GM10248 (cell line): ENCODE measurements at regions of chr3 and their contacts with region 1.

Region 1: DNA sequence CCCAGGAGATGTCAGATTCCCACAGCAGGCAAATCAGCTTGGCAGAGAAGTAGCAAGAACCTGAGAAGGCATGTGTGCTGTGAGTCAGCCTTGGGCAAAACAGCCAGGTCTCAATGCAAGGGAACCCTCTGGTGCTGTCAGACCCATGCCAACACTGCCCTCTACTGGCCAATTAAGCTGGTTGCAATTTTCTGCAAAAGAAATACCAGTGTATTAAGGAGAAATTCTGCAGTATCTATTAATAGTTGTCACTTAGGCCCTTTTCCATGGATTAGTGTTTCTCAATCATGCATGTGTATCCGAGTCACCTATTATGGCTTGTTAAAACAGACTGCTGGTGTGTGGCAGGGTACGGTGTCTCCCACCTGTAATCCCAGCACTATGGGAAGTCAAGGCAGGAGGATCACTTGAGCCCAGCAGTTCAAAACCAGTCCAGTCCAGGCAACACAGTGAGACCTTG is 26.2 kb downstream of the MAP4 start:
- DNase-seq: peak; percentile 70
- CTCF ChIP-seq: peak; percentile 85

Region 2: DNA sequence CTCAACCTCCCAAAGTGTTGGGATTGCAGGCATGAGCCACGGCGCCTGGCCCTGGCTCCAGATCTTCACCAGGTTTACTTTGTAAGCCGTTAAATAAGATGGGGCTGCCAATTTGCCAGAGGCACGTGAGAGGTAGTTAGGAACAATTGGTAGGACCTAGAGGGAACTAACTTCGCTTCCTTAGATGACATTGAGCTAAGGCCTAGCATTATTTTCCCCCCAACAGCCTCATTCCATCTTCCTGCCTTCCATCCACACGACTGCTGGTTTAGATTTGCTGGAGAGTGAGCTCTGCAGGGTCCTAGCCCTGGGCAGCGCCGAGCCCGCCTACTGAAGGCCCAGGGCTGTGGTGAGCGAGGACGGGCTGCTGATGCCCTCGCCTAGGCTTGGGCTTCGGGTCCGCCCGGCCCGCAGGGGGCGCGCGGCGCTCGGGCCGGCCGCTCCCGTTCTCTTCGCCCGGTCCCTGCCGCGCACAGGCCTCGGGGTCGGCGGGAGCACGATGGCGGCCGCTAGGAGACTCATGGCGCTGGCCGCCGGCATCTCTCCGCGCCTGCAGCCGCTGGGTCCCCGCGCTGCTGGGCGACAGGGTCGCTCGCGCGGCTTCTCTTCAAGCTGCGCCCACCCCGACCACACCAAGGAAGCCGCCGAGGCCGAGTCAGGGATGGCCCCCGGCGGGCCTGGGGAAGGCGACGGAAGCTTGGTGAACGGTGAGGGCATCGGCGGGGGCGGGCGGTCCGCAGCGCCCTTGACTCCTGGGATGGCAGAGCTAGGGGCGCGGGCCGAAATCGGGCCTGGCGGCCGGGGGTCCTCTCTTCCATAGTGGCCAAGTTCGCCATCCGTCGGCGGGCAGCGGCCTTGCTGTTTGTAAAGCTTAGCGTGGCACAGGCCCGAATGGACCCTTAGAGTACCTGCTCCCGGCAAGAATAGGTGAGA is 165.2 kb before region 1 on chr3:
- CTCF ChIA-PET with region 1: interaction called, 41 read pairs
- POLR2A ChIA-PET with region 1: no interaction called
- DNase-seq: peak; percentile 96
- CTCF ChIP-seq: peak; percentile 96

Region 3: DNA sequence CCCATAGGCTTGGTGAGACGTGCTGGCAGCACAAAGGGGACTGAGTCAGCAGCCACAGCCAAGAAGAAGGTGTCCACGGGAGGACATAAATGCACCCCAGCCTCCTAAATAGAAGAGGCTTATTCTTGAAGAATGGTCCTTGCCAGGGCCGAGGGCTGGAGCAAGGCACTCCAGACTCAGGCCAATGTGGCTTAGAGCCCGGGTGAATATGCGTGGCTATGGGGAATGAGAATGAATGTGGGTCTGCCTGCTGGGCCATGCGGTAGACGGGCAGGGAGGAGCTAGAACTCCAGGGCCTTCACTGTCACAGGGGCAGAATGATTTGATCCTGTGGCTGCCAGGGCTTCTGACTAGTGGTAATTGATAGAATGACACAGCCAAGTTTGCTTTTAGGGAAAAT is 153.0 kb before region 1 on chr3:
- CTCF ChIA-PET with region 1: interaction called, 65 read pairs
- POLR2A ChIA-PET with region 1: no interaction called
- DNase-seq: no peak
- CTCF ChIP-seq: no peak

Region 4: DNA sequence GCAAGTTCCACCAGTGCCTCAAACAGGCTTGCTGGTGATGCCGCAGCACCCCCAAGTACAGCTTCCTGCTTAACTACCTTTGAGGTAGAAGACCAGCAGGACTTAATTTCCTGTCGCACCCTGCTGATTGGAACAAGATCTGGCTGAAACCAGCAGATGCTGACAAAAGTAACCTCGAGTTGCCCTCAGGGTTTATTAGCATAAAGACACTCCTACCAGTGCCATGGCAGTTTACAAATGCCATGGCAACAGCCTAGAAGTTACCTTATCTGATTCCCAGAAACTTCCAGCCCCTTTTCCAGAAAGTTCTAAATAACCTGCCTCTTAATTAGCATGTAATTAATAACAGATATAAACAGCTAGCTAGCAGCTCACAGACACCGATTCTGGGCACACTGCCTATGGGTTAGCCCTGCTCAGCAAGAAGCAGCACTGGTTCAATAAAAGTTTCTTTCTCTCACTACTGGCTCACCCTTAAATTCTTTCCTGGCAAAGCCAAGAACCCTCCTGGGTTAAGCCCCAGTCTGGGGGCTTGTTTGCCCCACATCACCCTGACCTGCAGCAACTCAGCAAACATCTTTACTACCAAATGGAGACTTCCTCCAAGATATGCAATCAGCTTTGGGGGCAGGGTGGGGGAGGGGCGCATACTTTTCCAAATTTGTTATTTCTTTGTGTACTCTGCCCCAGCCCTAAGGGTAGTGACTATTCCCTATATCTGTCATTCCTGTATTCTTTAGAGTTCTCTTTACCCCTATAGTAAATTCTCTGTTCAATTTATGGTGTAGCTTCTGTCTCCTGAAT is 28.0 kb before region 1 on chr3:
- CTCF ChIA-PET with region 1: interaction called, 16 read pairs
- POLR2A ChIA-PET with region 1: no interaction called
- DNase-seq: no peak
- CTCF ChIP-seq: no peak

Region 5: DNA sequence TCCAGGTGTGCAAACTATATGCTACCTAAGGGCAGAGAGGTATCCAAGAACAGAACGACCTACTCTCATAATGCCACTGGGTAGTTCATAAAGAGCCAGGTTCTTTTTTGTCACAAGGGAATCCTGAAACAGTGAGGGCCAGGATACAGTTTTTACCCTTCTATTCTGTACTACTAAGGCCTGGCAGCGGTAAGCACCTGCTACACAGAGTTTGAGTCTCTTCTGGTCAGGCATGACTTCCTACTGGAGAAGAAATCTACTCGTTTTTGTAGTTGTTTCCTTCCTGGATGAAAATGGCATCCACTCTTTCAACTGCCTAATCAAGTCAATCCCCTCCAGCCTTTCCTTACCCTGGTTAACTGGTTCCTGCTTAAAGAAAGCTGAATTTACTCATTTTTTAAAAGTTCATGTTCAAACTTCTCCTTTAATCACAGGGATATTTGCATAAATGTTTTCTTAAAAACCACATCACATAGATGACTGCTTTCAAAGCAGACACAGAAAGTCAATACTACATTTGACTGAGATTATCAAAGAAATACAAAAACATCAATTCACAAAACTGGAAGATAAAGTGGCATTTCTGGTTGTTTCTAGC is 13.8 kb before region 1 on chr3:
- CTCF ChIA-PET with region 1: interaction called, 77 read pairs
- POLR2A ChIA-PET with region 1: no interaction called
- DNase-seq: peak; percentile 30
- CTCF ChIP-seq: no peak

Region 6: DNA sequence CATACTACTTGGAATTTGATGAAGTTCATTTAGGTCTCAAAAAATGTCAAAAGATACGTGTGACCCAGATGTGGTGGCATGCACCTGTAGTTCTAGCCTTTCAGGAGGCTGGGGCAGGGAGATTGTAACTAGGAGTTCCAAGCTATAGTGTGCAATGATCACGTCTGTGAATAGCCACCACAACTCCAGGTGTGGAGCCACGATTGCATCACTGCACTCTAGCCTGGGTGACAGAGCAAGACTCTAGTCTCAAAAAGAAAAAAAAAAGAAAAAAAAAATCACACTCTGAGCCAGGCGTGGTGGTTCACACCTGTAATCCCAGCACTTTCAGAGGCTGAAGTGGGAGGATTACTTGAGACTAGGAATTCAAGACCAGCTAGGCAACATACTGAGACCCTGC is 12.0 kb after region 1 on chr3:
- CTCF ChIA-PET with region 1: interaction called, 18 read pairs
- POLR2A ChIA-PET with region 1: no interaction called
- DNase-seq: no peak
- CTCF ChIP-seq: no peak

Region 7: DNA sequence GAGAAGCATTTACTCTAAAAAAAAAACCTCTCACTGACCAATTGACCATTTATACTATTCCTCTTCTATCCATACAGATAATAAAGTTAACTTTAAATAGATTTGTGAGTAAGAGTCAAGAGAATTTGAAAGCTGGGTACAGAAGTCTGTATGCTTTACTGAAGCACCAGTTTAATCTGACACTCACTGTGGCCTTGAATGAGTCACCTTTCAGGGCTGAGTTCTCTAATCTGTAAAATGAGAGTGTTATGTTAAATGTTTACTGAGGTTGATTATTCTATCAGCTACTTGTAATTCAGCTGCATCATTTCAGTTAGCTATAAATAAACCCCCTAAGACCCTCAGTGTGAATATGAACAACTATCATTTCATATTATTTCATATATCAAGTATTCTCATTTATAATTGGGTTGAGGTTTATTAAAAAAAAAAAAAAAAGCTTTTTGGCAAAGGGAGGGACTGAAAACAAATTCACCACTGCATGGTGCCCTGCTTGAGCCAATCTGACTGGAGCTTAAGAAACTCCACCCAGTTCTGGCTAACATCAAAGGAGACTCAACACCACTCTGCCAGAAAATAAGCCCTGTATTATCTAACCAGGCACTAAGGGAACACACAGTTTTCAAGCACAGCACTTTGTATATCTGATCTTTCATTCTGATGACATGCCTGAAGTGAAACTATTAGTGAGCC is 23.4 kb after region 1 on chr3:
- CTCF ChIA-PET with region 1: interaction called, 25 read pairs
- POLR2A ChIA-PET with region 1: no interaction called
- DNase-seq: no peak
- CTCF ChIP-seq: no peak